ENCODE measurements at regions of chr12 and their contacts with region 1.

Region 1: DNA sequence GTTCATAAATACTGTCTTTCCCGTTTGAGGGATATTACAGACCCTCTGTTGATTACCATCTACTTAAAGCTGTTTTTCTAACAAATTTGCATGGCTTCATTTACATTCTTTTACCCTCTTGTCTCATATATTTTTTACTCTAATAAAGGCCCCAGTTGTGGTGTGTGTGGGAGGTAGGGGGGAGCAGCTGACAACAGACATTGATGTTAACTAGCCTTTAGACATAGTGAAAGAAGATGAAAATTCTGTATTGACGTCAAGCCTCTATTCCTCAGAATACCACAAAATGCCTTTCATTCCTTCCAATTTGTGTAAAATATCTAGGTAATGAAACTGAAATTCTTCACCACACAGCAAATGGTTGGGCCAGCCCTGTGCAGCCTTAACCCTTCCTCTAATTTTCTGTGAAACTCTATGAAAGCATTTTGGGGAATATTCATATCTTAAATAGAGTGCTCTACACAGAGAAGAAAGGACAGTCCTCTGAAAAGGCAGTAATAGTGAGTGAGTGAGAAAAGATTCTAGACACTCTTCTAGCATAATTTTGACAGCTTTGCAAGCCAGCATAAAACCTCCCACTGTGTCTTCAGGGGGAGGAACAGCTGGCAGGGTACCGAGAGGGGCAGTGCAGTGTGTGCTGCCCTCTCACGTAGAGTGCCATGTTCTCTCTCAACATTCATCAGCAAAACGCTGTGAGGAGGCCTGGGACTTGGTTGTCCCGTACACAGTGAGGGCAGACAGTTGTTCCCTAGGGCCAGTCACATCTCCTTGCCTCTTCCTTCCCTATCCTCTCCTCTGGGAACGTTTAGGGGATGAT is 20.1 kb upstream of the CERS5 start:
- DNase-seq: peak; percentile 81
- H3K4me3 Mint-ChIP-seq: peak overlapping the region; percentile 46
- H3K27ac Mint-ChIP-seq: peak overlapping the region; percentile 99
- H3K4me1 Mint-ChIP-seq: peaks cover 55% of the 10 kb centered on the region
- H3K27me3 Mint-ChIP-seq: no peaks in the 10 kb centered on the region

Region 2: DNA sequence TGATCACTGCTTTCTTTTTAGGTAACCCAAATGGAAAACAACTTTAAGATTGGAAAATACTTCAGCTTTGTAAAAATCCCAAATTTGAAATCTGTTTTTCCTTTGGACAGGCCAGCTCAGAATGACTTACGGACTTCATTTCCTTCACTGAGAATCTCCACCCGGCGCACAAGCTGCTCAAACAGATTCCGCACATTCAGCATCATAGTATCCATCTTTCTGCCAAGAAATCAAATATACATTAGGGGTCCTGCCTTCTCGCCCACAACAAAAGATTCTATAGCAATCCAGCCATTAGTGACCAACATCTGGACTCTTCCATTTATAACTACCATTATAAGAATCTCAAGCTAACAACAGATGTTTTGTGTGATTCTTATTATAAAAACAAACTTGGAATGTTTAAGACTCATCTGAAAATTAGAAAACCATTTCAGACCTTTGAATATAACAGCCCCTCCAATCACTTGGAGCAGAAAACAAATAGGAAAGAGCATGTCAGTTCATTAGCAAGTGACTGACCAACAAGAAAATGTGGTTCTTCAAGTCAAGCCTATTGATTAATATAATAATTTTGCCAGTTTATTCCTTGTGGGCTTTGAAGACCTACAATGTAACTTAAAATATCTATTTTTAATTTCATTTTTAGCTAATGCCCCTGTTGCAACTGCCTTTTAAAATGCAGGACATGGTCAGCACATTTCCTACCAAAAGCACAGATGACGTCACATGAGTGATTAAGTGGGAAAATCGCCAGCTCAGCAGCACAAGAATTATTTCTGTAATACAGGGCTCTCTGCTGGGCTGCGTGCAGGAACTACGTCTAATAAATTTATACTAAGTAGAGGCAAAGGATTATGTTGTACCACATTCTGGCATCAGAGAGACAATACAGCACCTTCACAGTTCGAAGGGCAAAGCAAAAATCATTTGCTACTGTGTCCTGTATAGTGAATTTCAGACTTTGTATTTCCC is 170.5 kb before region 1 on chr12:
- CTCF ChIA-PET with region 1: no interaction called
- POLR2A ChIA-PET with region 1: no interaction called
- intact Hi-C with region 1: no loop called
- DNase-seq: no peak
- H3K4me3 Mint-ChIP-seq: no peak overlapping the region
- H3K27ac Mint-ChIP-seq: no peak overlapping the region
- H3K4me1 Mint-ChIP-seq: peaks cover 16% of the 10 kb centered on the region
- H3K27me3 Mint-ChIP-seq: no peaks in the 10 kb centered on the region

Region 3: DNA sequence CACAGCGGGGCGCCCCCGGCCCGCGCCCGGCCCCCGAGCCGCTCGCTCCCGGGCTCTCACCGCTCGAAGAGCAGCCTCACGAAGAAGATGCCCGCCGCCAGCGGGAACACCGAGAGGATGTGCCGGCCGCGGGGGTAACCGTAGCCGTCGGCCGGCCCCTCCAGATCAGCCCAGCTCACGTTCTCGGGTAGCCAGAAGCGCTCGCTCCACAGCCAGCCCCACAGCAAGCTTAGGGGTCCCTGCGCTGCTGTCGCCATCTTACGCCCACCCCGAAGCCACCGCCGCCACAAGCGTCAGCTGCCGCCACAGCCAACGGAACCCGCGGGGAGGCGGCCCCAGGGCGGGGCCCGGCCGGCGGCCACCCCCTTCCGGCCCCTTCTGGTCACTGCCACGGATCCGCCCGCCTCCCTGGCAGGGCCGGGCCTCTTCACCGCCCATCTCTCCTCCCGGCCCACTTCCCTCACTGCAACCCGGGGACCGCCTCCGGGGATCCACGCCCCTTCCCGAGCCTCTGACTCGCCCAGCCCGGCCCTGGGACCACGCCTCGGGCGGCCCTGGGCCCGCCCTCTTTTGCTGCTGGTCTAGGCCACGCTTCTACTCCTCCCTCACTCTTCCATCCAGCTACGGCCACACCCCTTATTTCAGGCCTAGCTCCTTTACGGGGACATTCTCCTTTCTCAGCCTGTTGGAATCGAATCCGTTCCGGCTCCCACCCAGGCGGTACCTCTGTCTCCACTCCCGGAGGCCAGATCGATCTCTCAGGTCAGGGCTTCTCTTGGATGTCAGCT is 20.1 kb before region 1 on chr12 and contains the start of gene CERS5:
- CTCF ChIA-PET with region 1: interaction called, 3 read pairs
- POLR2A ChIA-PET with region 1: interaction called, 3 read pairs
- intact Hi-C with region 1: loop called (anchors 1 kb)
- DNase-seq: peak; percentile 99
- H3K4me3 Mint-ChIP-seq: peak within 1 kb of the TSS; percentile 84
- H3K27ac Mint-ChIP-seq: peak within 1 kb of the TSS; percentile 94
- H3K4me1 Mint-ChIP-seq: peaks cover 28% of the 10 kb centered on the region
- H3K27me3 Mint-ChIP-seq: no peaks in the 10 kb centered on the region
- total RNA-seq, gene CERS5: 59.5 to 63.0 TPM

Region 4: GRCh38 chr12:50174971-50175715 is 12.1 kb before region 1 on chr12:
- CTCF ChIA-PET with region 1: interaction called, 15 read pairs
- POLR2A ChIA-PET with region 1: interaction called, 3 read pairs
- intact Hi-C with region 1: no loop called
- DNase-seq: no peak
- H3K4me3 Mint-ChIP-seq: no peak overlapping the region
- H3K27ac Mint-ChIP-seq: no peak overlapping the region
- H3K4me1 Mint-ChIP-seq: no peaks in the 10 kb centered on the region
- H3K27me3 Mint-ChIP-seq: no peaks in the 10 kb centered on the region

Region 5: DNA sequence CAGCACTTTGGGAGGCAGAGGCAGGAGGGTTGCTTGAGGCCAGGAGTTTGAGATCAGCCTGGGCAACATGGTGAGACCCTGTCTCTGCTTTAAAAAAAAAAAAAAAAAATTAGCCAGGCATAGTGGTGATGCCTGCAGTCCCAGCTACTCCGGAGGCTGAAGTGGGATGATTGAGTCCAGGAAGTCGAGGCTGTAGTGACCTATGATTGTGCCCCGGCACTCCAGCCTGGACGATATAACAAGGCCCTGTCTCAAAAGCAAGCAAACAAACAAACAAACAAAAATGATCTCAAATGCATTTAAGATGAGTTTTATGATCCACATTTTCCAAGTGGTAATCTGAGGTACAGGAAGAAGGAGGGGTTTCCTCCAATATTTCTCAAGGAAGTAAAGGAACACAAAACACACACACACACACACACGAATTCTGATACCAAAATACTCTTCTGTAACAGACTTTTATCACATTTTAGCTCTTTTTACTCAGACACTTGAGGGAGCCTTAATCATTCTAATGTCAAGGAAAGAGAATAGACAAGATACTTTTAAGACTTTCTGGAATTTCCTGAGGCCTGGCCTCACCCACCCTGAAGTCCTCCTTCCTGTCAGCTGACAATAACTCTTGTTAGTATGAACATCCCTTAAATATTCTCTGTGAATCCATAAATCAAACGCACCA is 24.2 kb after region 1 on chr12:
- CTCF ChIA-PET with region 1: interaction called, 3 read pairs
- POLR2A ChIA-PET with region 1: interaction called, 3 read pairs
- intact Hi-C with region 1: loop called (anchors 2 kb)
- DNase-seq: no peak
- H3K4me3 Mint-ChIP-seq: peak overlapping the region; percentile 47
- H3K27ac Mint-ChIP-seq: peak overlapping the region; percentile 91
- H3K4me1 Mint-ChIP-seq: peaks cover 38% of the 10 kb centered on the region
- H3K27me3 Mint-ChIP-seq: no peaks in the 10 kb centered on the region

Region 6: GRCh38 chr12:50257686-50258551 is 70.6 kb after region 1 on chr12:
- CTCF ChIA-PET with region 1: no interaction called
- POLR2A ChIA-PET with region 1: interaction called, 3 read pairs
- intact Hi-C with region 1: loop called (anchors 1 kb)
- DNase-seq: no peak
- H3K4me3 Mint-ChIP-seq: no peak overlapping the region
- H3K27ac Mint-ChIP-seq: no peak overlapping the region
- H3K4me1 Mint-ChIP-seq: peaks cover 24% of the 10 kb centered on the region
- H3K27me3 Mint-ChIP-seq: no peaks in the 10 kb centered on the region

Region 7: DNA sequence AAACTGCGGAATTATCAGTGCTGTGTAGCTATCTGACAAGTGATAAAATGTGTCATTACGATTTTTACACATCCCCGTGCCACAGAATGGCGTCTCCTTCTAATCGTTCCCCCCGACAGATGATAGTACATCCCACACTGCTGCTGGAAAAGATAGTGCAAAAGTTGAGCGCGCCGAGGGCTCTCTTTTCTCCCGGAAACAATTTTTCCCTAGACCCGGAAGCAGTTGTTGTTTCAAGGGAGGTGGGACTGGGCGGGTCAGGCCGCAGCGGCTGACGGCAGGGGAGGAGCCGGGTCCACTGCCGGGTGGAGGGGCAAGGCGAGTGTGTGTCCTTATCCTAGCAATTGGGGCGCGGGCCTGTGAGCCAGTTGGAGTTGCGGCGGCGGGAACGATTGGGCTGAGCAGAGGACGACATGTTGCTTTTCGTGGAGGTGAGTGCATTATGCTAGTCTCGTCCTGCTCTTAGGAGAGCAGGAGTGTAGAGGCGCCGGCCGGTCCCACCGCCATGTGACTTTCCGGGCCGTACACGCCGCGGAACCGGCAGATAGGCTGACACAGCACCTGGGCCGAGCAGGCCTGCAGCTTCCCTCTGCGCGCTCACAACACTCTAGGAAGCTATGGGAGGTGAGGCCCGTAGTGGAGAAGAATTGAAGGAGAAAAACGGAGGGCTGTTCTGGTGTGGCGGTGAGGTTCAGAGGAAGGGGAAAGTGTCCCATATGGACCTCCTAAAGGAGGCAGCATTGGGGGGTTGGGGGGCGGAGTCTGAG is 213.5 kb after region 1 on chr12 and contains the start of gene LARP4:
- CTCF ChIA-PET with region 1: no interaction called
- POLR2A ChIA-PET with region 1: interaction called, 3 read pairs
- intact Hi-C with region 1: loop called (anchors 10 kb)
- DNase-seq: peak; percentile 95
- H3K4me3 Mint-ChIP-seq: peak within 1 kb of the TSS; percentile 91
- H3K27ac Mint-ChIP-seq: peak within 1 kb of the TSS; percentile 95
- H3K4me1 Mint-ChIP-seq: peaks cover 23% of the 10 kb centered on the region
- H3K27me3 Mint-ChIP-seq: no peaks in the 10 kb centered on the region
- total RNA-seq, gene LARP4: 62.2 to 64.0 TPM

Region 8: GRCh38 chr12:50542448-50542847 is 355.2 kb after region 1 on chr12:
- CTCF ChIA-PET with region 1: no interaction called
- POLR2A ChIA-PET with region 1: no interaction called
- intact Hi-C with region 1: loop called (anchors 1 kb)
- DNase-seq: peak; percentile 41
- H3K4me3 Mint-ChIP-seq: no peak overlapping the region
- H3K27ac Mint-ChIP-seq: peak overlapping the region; percentile 87
- H3K4me1 Mint-ChIP-seq: peaks cover 48% of the 10 kb centered on the region
- H3K27me3 Mint-ChIP-seq: no peaks in the 10 kb centered on the region